WTC11 (cell line): ENCODE measurements at regions of chr1 and their contacts with region 1.

Region 1: GRCh38 chr1:160951443-160952128 is 3.0 kb downstream of the ITLN2 start:
- DNase-seq: peak; percentile 71
- ATAC-seq: peak; percentile 60
- H3K4me3 Mint-ChIP-seq: no peak overlapping the region
- H3K27ac Mint-ChIP-seq: no peak overlapping the region
- H3K4me1 Mint-ChIP-seq: peaks cover 38% of the 10 kb centered on the region
- H3K27me3 Mint-ChIP-seq: no peaks in the 10 kb centered on the region
- CTCF ChIP-seq: peak; percentile 58

Region 2: GRCh38 chr1:160607011-160607671 is 344.4 kb before region 1 on chr1:
- CTCF ChIA-PET with region 1: no interaction called
- POLR2A ChIA-PET with region 1: no interaction called
- DNase-seq: peak; percentile 45
- ATAC-seq: peak; percentile 81
- H3K4me3 Mint-ChIP-seq: no peak overlapping the region
- H3K27ac Mint-ChIP-seq: no peak overlapping the region
- H3K4me1 Mint-ChIP-seq: peaks cover 53% of the 10 kb centered on the region
- H3K27me3 Mint-ChIP-seq: no peaks in the 10 kb centered on the region; the same call in 1 of the 2 replicates
- CTCF ChIP-seq: peak; percentile 56

Region 3: GRCh38 chr1:160637821-160638539 is 313.6 kb before region 1 on chr1:
- CTCF ChIA-PET with region 1: no interaction called
- POLR2A ChIA-PET with region 1: no interaction called
- DNase-seq: no peak
- ATAC-seq: peak; percentile 48
- H3K4me3 Mint-ChIP-seq: no peak overlapping the region
- H3K27ac Mint-ChIP-seq: peak overlapping the region; percentile 7; the same call in 1 of the 2 replicates
- H3K4me1 Mint-ChIP-seq: peaks cover 23% of the 10 kb centered on the region
- H3K27me3 Mint-ChIP-seq: peaks cover 19% of the 10 kb centered on the region
- CTCF ChIP-seq: no peak

Region 4: GRCh38 chr1:160675641-160676410 is 275.8 kb before region 1 on chr1:
- CTCF ChIA-PET with region 1: interaction called, 21 read pairs
- POLR2A ChIA-PET with region 1: no interaction called
- DNase-seq: peak; percentile 75
- ATAC-seq: peak; percentile 76
- H3K4me3 Mint-ChIP-seq: no peak overlapping the region
- H3K27ac Mint-ChIP-seq: no peak overlapping the region; the same call in 1 of the 2 replicates
- H3K4me1 Mint-ChIP-seq: peaks cover 10% of the 10 kb centered on the region
- H3K27me3 Mint-ChIP-seq: no peaks in the 10 kb centered on the region; the same call in 1 of the 2 replicates
- CTCF ChIP-seq: no peak

Region 5: DNA sequence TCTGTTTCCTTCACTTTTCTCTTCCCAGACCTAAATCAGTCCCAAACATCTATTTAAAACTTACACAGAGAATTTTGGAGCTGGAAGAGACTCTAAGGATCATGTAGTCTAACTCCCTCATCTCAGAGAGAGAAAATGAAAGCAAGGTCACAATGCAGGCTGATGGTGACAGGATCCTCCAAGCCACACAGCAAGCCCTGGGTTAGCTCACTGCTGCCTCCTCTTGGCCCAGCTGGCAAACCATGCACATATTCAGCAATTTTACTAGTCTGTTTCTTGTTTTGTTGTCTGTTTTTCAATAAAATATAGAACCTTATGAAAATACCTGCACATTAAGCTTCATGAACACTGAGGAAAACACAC is 183.3 kb before region 1 on chr1:
- CTCF ChIA-PET with region 1: interaction called, 12 read pairs
- POLR2A ChIA-PET with region 1: no interaction called
- DNase-seq: peak; percentile 71
- ATAC-seq: peak; percentile 89
- H3K4me3 Mint-ChIP-seq: no peak overlapping the region
- H3K27ac Mint-ChIP-seq: no peak overlapping the region
- H3K4me1 Mint-ChIP-seq: peaks cover 6% of the 10 kb centered on the region
- H3K27me3 Mint-ChIP-seq: peaks cover 3% of the 10 kb centered on the region; the same call in 1 of the 2 replicates
- CTCF ChIP-seq: peak; percentile 30; the same call in 1 of the 2 replicates

Region 6: DNA sequence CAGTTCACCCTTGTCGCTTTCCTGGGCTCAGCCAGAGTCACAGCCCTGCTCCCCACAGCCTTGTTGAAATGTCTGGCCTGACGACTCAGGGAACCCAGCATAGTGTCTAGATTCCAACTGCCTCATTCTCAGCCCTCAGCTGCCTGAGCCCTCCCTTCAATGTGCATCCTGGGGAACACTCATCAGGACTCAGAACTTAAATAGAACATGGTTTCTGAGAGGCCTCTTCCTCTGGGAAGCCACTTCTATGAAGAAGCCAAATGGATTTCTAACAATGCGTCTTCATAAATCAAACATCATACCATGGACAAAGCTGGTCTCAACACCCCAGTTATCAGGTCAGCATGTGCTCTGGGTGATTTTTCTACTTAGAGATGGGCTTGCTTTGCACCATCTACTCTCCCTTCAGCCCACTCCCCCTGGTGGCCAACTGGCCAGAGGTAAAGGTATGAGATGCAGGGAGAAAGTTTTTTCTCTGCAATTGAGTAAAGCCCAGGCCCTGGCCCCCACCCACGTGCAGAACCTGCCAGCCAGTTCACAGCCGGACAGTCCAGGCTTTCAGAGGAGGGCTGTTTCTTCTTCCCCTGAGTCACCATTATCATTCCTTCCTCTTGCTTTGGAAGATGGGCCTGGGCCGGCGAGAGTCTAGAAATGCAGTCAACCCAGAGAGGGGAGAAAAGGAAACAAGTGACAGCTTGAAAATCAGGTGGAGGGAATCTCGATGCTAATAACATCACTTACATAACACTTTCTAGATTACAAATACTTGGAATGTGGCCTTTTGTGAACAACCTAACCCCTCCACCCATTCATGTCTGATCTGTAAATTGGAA is 121.0 kb before region 1 on chr1:
- CTCF ChIA-PET with region 1: interaction called, 78 read pairs
- POLR2A ChIA-PET with region 1: no interaction called
- DNase-seq: peak; percentile 91
- ATAC-seq: peak; percentile 93
- H3K4me3 Mint-ChIP-seq: no peak overlapping the region
- H3K27ac Mint-ChIP-seq: no peak overlapping the region
- H3K4me1 Mint-ChIP-seq: peaks cover 12% of the 10 kb centered on the region
- H3K27me3 Mint-ChIP-seq: peaks cover 11% of the 10 kb centered on the region; the same call in 1 of the 2 replicates
- CTCF ChIP-seq: peak; percentile 76

Region 7: GRCh38 chr1:160891474-160891873 is 60.1 kb before region 1 on chr1:
- CTCF ChIA-PET with region 1: no interaction called
- POLR2A ChIA-PET with region 1: no interaction called
- DNase-seq: no peak
- ATAC-seq: no peak
- H3K4me3 Mint-ChIP-seq: no peak overlapping the region
- H3K27ac Mint-ChIP-seq: no peak overlapping the region
- H3K4me1 Mint-ChIP-seq: no peaks in the 10 kb centered on the region
- H3K27me3 Mint-ChIP-seq: peaks cover 5% of the 10 kb centered on the region; the same call in 1 of the 2 replicates
- CTCF ChIP-seq: no peak

Region 8: GRCh38 chr1:160963521-160963920 is 11.9 kb after region 1 on chr1:
- CTCF ChIA-PET with region 1: interaction called, 12 read pairs
- POLR2A ChIA-PET with region 1: no interaction called
- DNase-seq: no peak
- ATAC-seq: no peak
- H3K4me3 Mint-ChIP-seq: no peak overlapping the region
- H3K27ac Mint-ChIP-seq: no peak overlapping the region
- H3K4me1 Mint-ChIP-seq: peaks cover 13% of the 10 kb centered on the region
- H3K27me3 Mint-ChIP-seq: no peaks in the 10 kb centered on the region
- CTCF ChIP-seq: no peak

Region 9: GRCh38 chr1:160987359-160988062 is 35.9 kb after region 1 on chr1:
- CTCF ChIA-PET with region 1: interaction called, 141 read pairs
- POLR2A ChIA-PET with region 1: interaction called, 7 read pairs
- DNase-seq: no peak
- ATAC-seq: peak; percentile 62
- H3K4me3 Mint-ChIP-seq: peak overlapping the region; percentile 36
- H3K27ac Mint-ChIP-seq: peak overlapping the region; percentile 84
- H3K4me1 Mint-ChIP-seq: peaks cover 64% of the 10 kb centered on the region
- H3K27me3 Mint-ChIP-seq: no peaks in the 10 kb centered on the region
- CTCF ChIP-seq: no peak

Region 10: GRCh38 chr1:161082991-161083742 is 131.6 kb after region 1 on chr1:
- CTCF ChIA-PET with region 1: no interaction called
- POLR2A ChIA-PET with region 1: no interaction called
- DNase-seq: no peak
- ATAC-seq: no peak; the same call in none of the 2 replicates
- H3K4me3 Mint-ChIP-seq: no peak overlapping the region
- H3K27ac Mint-ChIP-seq: no peak overlapping the region
- H3K4me1 Mint-ChIP-seq: peaks cover 41% of the 10 kb centered on the region
- H3K27me3 Mint-ChIP-seq: no peaks in the 10 kb centered on the region; the same call in 1 of the 2 replicates
- CTCF ChIP-seq: no peak

Region 11: GRCh38 chr1:161098210-161099068 is 146.9 kb after region 1 on chr1 and contains the start of gene KLHDC9:
- CTCF ChIA-PET with region 1: interaction called, 21 read pairs
- POLR2A ChIA-PET with region 1: no interaction called
- DNase-seq: peak; percentile 91
- ATAC-seq: peak; percentile 86
- H3K4me3 Mint-ChIP-seq: peak within 1 kb of the TSS; percentile 80
- H3K27ac Mint-ChIP-seq: peak within 1 kb of the TSS; percentile 81
- H3K4me1 Mint-ChIP-seq: peaks cover 6% of the 10 kb centered on the region
- H3K27me3 Mint-ChIP-seq: peaks cover 6% of the 10 kb centered on the region; the same call in 1 of the 2 replicates
- CTCF ChIP-seq: no peak
- total RNA-seq, gene KLHDC9: 5.8 to 8.7 TPM (median 8.7 TPM) in 3 replicates